ENCODE measurements at regions of chrX and their contacts with region 1.

Region 1: DNA sequence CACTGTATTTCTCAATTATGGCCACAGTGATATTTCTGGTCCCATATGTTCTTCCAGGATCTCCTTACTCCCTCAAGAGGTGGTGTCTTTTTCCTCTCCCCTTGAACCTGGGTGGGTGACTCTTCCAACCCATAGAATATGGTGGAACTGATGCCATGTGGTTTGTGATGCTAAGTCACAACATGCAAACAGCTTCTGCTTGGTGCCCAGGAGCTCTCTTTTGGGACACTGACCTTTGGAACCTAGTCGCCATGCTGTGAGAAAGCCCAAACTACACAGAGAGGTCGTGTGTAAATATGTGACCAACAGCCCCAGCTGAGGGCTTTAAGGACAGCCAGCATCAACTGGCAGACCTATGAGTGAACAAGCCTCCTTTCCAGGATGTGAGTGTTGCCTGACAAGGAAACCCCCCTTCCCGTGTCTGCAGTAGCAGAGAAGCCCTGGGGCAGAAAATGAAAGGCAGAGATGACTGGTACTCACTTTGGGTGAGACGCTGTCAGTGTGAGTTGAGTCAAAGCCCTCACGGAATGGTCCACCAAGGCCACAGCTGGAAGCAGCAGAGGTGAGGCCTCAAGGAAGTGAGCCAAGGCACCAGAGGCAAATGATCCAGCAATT is 223.4 kb downstream of the BCOR start:
- DNase-seq: peak; percentile 89
- H3K4me3 Mint-ChIP-seq: no peak overlapping the region
- H3K27ac Mint-ChIP-seq: peak overlapping the region; percentile 89
- H3K4me1 Mint-ChIP-seq: peaks cover 49% of the 10 kb centered on the region
- H3K27me3 Mint-ChIP-seq: no peaks in the 10 kb centered on the region

Region 2: GRCh38 chrX:39730662-39731397 is 143.5 kb before region 1 on chrX:
- CTCF ChIA-PET with region 1: no interaction called
- intact Hi-C with region 1: loop called (anchors 5 kb)
- DNase-seq: peak; percentile 75
- H3K4me3 Mint-ChIP-seq: peak overlapping the region; percentile 45
- H3K27ac Mint-ChIP-seq: no peak overlapping the region
- H3K4me1 Mint-ChIP-seq: peaks cover 17% of the 10 kb centered on the region
- H3K27me3 Mint-ChIP-seq: no peaks in the 10 kb centered on the region

Region 3: GRCh38 chrX:39891781-39892180 is 17.5 kb after region 1 on chrX:
- CTCF ChIA-PET with region 1: no interaction called
- intact Hi-C with region 1: loop called (anchors 1 kb)
- DNase-seq: peak; percentile 27
- H3K4me3 Mint-ChIP-seq: no peak overlapping the region
- H3K27ac Mint-ChIP-seq: peak overlapping the region; percentile 75
- H3K4me1 Mint-ChIP-seq: peaks cover 27% of the 10 kb centered on the region
- H3K27me3 Mint-ChIP-seq: no peaks in the 10 kb centered on the region

Region 4: GRCh38 chrX:39903937-39904336 is 29.6 kb after region 1 on chrX:
- CTCF ChIA-PET with region 1: no interaction called
- intact Hi-C with region 1: loop called (anchors 1 kb)
- DNase-seq: peak; percentile 29
- H3K4me3 Mint-ChIP-seq: no peak overlapping the region
- H3K27ac Mint-ChIP-seq: no peak overlapping the region
- H3K4me1 Mint-ChIP-seq: peaks cover 20% of the 10 kb centered on the region
- H3K27me3 Mint-ChIP-seq: no peaks in the 10 kb centered on the region

Region 5: DNA sequence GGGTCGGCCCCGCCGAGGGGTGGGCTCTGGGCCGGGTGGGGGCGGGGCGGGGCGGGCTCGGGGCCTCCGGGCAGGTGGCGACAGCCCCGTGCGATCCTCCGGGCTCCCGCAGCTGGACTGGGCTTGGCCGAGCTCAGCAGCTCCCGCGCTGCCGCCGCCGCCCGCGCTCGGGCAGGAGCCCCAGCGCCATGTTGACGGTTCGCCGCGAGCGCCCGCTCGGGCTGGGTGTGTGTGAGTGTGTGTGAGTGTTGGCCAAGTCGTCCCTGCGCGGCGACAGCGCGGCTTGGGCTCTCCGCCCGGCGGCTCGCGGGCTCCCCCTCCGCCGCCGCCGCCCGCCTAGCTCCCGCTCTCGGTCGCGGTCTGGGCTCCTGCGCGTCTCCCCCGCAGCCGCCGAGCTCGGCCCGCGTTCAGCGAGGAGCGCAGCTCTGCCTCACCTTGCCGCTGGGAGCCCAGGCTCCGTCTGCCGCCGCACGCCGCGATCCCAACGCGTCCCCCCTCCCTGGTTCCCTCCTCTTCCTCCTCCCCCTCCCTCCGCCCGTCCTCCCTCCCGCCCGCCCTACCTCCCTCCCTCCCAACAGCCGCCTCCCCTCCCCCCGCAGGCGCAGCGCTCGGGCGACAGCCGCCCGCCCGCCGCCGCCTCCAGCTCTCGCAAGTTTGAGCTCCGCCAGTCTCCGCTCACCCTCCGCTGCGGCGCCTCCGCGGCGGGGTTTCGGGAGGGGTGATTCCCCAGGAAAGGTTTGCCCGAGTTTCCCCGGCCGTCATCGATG is 223.4 kb after region 1 on chrX and contains the start of gene BCOR:
- CTCF ChIA-PET with region 1: no interaction called
- intact Hi-C with region 1: loop called (anchors 5 kb)
- DNase-seq: peak; percentile 75
- H3K4me3 Mint-ChIP-seq: peak within 1 kb of the TSS; percentile 86
- H3K27ac Mint-ChIP-seq: peak within 1 kb of the TSS; percentile 82
- H3K4me1 Mint-ChIP-seq: peaks cover 24% of the 10 kb centered on the region
- H3K27me3 Mint-ChIP-seq: no peaks in the 10 kb centered on the region
- total RNA-seq, gene BCOR: 29.1 to 29.9 TPM

Region 6: GRCh38 chrX:40468033-40468846 is 593.9 kb after region 1 on chrX:
- CTCF ChIA-PET with region 1: no interaction called
- intact Hi-C with region 1: loop called (anchors 1 kb)
- DNase-seq: peak; percentile 79
- H3K4me3 Mint-ChIP-seq: no peak overlapping the region
- H3K27ac Mint-ChIP-seq: peak overlapping the region; percentile 61
- H3K4me1 Mint-ChIP-seq: peaks cover 36% of the 10 kb centered on the region
- H3K27me3 Mint-ChIP-seq: no peaks in the 10 kb centered on the region

Measured in activated naive CD4-positive, alpha-beta T cell treated with anti-CD3 and anti-CD28 coated beads for 36 hours (primary cell).